Mammary epithelial cell (primary cell): ENCODE measurements at regions of chr5 and their contacts with region 1.

Region 1: DNA sequence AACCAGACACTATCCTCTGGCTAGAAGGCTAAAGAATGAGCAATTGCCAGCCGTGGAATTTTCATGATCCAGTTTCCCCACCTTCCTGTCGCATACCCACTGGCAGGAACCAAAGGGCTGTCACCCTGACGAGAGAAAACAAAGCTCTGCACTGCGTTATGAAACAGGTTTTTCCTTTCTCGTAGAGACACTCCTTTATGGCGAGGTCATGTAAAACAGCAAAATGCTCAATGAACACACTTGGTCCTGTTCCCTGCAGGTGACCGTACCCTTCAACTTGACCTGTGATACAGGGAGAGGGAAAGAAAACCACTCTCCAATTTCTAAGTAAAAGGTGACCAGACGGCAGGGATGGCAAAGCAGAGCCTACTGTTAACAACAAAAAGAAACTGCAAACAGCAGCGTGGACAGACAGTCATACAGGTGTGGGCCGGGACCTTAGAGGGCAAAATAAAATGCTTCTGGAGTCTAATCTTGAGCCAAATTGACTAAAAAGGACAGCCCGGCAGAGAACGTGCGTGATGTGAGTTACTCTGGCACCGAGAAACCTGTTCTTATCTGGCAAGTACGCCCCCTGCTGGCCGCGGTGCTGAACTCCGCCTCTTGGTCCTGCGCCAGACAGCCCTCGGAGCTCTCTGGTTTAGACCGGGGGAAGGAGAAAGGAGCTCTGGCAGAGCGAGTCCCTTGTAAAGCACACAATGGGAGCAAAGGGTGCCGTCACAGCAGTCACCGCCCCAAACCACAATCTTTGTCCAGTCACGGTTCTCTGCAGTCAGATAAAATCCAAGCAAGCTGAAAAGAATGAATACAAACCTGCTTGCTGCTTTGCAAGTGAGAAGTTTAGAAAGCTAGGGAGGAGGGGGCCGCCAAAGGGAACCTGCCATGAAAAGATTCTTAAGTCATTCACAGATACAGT is 98.9 kb downstream of the EFNA5 start:
- DNase-seq: peak; percentile 97
- H3K4me3 ChIP-seq: peak overlapping the region; percentile 20 to 42 (median 35)
- H3K27ac ChIP-seq: peak overlapping the region; percentile 80
- H3K4me1 ChIP-seq: peaks cover 64% of the 10 kb centered on the region
- H3K27me3 ChIP-seq: no peaks in the 10 kb centered on the region
- CTCF ChIP-seq: peak; percentile 79 to 92

Region 2: GRCh38 chr5:107248066-107248695 is 323.7 kb before region 1 on chr5:
- CTCF ChIA-PET with region 1: no interaction called
- dilution Hi-C with region 1: no loop called
- in situ Hi-C with region 1: no loop called
- intact Hi-C with region 1: loop called (anchors 2 kb)
- DNase-seq: peak; percentile 30
- H3K4me3 ChIP-seq: no peak overlapping the region
- H3K27ac ChIP-seq: no peak overlapping the region
- H3K4me1 ChIP-seq: no peaks in the 10 kb centered on the region
- H3K27me3 ChIP-seq: no peaks in the 10 kb centered on the region
- CTCF ChIP-seq: peak; percentile 77 to 81

Region 3: DNA sequence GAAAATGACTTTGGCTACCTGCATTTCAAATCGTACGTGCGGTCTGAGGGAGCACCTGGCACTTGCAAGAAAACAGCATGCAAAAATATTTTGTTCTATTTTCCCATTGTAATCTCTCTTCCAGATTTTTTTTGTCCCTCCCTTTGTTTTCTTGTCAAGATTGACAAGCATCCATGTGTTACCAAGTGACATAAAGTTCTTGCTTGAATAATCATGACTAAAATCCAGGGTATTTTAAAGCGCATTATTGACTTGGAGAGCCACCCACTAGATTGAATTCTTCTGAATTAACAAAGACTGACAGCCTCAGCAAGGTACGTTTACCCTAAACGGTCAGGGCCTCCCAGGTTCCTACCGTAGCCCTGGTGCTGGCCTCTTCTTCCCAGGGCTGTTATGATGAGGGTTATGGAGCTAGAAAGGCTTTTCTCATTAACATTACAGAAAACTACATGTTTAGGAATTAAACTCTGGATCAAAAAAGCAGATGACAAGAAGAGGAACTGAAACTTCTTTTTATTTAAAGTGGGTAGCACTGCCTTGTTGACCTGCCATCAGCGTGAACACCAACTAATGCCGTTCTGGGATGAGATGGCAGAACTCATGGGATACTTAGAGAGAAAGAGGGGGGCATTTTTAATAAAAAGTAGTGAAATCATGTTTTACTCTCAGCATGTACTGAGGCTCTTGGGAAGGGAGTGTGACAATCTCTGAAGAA is 198.2 kb before region 1 on chr5:
- CTCF ChIA-PET with region 1: no interaction called
- dilution Hi-C with region 1: no loop called
- in situ Hi-C with region 1: no loop called
- intact Hi-C with region 1: loop called (anchors 5 kb)
- DNase-seq: no peak
- H3K4me3 ChIP-seq: no peak overlapping the region
- H3K27ac ChIP-seq: no peak overlapping the region
- H3K4me1 ChIP-seq: peaks cover 24% of the 10 kb centered on the region
- H3K27me3 ChIP-seq: no peaks in the 10 kb centered on the region
- CTCF ChIP-seq: no peak

Region 4: DNA sequence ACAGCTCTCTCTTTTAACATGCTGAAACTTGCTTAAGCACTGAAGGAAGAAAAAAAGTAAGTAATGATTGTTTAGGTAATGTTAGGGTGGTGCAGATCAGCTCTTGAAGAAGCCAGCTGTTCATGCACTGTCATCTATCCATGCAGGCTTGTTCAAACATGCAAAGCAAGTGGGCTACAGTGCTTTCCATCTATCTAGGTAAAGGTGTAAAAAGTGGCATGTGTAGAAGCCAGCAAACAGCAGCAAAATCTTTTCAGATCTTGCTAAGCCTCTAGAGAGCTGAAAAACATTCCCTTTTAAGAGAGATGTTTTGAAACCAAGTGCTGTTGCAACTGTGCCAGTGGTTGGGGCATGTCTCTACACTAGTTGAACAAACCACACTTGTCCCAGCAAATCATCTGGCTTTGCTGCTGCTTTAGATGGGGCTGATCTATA is 115.6 kb before region 1 on chr5:
- CTCF ChIA-PET with region 1: interaction called, 3 read pairs
- dilution Hi-C with region 1: no loop called
- in situ Hi-C with region 1: no loop called
- intact Hi-C with region 1: loop called (anchors 1 kb)
- DNase-seq: peak; percentile 89
- H3K4me3 ChIP-seq: no peak overlapping the region
- H3K27ac ChIP-seq: peak overlapping the region; percentile 70
- H3K4me1 ChIP-seq: peaks cover 37% of the 10 kb centered on the region
- H3K27me3 ChIP-seq: no peaks in the 10 kb centered on the region
- CTCF ChIP-seq: no peak

Region 5: GRCh38 chr5:107532169-107532878 is 39.6 kb before region 1 on chr5:
- CTCF ChIA-PET with region 1: no interaction called
- dilution Hi-C with region 1: no loop called
- in situ Hi-C with region 1: no loop called
- intact Hi-C with region 1: no loop called
- DNase-seq: no peak
- H3K4me3 ChIP-seq: no peak overlapping the region
- H3K27ac ChIP-seq: no peak overlapping the region
- H3K4me1 ChIP-seq: peaks cover 6% of the 10 kb centered on the region
- H3K27me3 ChIP-seq: no peaks in the 10 kb centered on the region
- CTCF ChIP-seq: no peak

Region 6: GRCh38 chr5:107542428-107542827 is 29.5 kb before region 1 on chr5:
- CTCF ChIA-PET with region 1: no interaction called
- dilution Hi-C with region 1: no loop called
- in situ Hi-C with region 1: no loop called
- intact Hi-C with region 1: loop called (anchors 1 kb)
- DNase-seq: peak; percentile 90
- H3K4me3 ChIP-seq: peak overlapping the region in 2 of 3 experiments; percentile 21 to 29
- H3K27ac ChIP-seq: peak overlapping the region; percentile 73
- H3K4me1 ChIP-seq: peaks cover 26% of the 10 kb centered on the region
- H3K27me3 ChIP-seq: no peaks in the 10 kb centered on the region
- CTCF ChIP-seq: no peak

Region 7: GRCh38 chr5:107618242-107618641 is 46.4 kb after region 1 on chr5:
- CTCF ChIA-PET with region 1: no interaction called
- dilution Hi-C with region 1: no loop called
- in situ Hi-C with region 1: no loop called
- intact Hi-C with region 1: no loop called
- DNase-seq: no peak
- H3K4me3 ChIP-seq: no peak overlapping the region
- H3K27ac ChIP-seq: no peak overlapping the region
- H3K4me1 ChIP-seq: no peaks in the 10 kb centered on the region
- H3K27me3 ChIP-seq: no peaks in the 10 kb centered on the region
- CTCF ChIP-seq: no peak